HEK293 (cell line): ENCODE measurements at regions of chr1 and their contacts with region 1.

Region 1: GRCh38 chr1:40774266-40774998 is 9.2 kb upstream of the KCNQ4 start:
- H3K4me3 ChIP-seq: no peak overlapping the region
- H3K27ac ChIP-seq: no peak overlapping the region
- H3K4me1 ChIP-seq: no peaks in the 10 kb centered on the region
- CTCF ChIP-seq: peak; percentile 39; the same call in 1 of the 2 replicates

Region 2: DNA sequence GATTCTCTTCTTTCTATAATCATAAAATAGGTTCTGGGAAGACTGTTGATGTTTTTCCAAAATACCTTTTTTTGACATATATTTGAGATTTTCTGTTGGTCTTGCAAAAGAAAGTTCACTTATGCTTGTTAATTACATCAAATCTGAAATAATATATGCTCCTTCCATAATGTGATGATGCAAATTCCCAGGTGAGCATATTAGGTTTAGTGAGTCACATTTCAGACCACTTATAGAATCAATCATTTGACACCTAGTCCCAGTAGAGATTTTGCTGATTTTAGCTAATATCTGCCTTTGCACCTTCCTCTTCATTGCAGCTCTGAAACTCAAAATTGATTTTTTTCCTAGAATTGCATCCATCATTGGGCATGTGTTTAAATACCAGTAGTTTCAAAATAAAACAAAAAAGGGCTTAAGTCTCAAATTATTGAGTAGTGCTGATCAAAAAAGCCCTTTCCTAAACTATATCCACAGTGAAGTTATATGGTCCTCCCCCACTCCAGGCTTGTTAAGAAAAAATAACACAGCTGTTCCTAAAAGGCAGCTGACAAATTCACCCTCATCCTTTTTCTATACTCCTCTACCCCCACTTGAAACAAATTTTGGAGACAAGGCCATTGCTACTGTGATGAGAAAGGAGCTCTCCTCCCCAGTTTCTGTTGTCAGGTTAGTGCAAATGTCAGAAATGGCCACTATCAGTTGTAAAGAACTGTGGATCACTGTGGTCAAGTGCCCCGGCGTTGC is 27.9 kb before region 1 on chr1:
- CTCF ChIA-PET with region 1: interaction called, 12 read pairs
- POLR2A ChIA-PET with region 1: no interaction called
- H3K4me3 ChIP-seq: no peak overlapping the region
- H3K27ac ChIP-seq: no peak overlapping the region
- H3K4me1 ChIP-seq: no peaks in the 10 kb centered on the region
- CTCF ChIP-seq: no peak

Region 3: GRCh38 chr1:40755067-40755466 is 19.4 kb before region 1 on chr1:
- CTCF ChIA-PET with region 1: interaction called, 16 read pairs
- POLR2A ChIA-PET with region 1: no interaction called
- H3K4me3 ChIP-seq: no peak overlapping the region
- H3K27ac ChIP-seq: no peak overlapping the region
- H3K4me1 ChIP-seq: no peaks in the 10 kb centered on the region
- CTCF ChIP-seq: no peak

Region 4: GRCh38 chr1:40763742-40764532 is 10.5 kb before region 1 on chr1:
- CTCF ChIA-PET with region 1: interaction called, 36 read pairs
- POLR2A ChIA-PET with region 1: no interaction called
- H3K4me3 ChIP-seq: no peak overlapping the region
- H3K27ac ChIP-seq: no peak overlapping the region
- H3K4me1 ChIP-seq: no peaks in the 10 kb centered on the region
- CTCF ChIP-seq: no peak

Region 5: GRCh38 chr1:40789675-40790430 is 15.4 kb after region 1 on chr1:
- CTCF ChIA-PET with region 1: interaction called, 15 read pairs
- POLR2A ChIA-PET with region 1: no interaction called
- H3K4me3 ChIP-seq: no peak overlapping the region
- H3K27ac ChIP-seq: no peak overlapping the region
- H3K4me1 ChIP-seq: no peaks in the 10 kb centered on the region
- CTCF ChIP-seq: no peak

Region 6: GRCh38 chr1:40849801-40850592 is 75.6 kb after region 1 on chr1:
- CTCF ChIA-PET with region 1: interaction called, 32 read pairs
- POLR2A ChIA-PET with region 1: no interaction called
- H3K4me3 ChIP-seq: no peak overlapping the region
- H3K27ac ChIP-seq: no peak overlapping the region
- H3K4me1 ChIP-seq: no peaks in the 10 kb centered on the region
- CTCF ChIP-seq: peak; percentile 89

Region 7: GRCh38 chr1:40951943-40952743 is 177.7 kb after region 1 on chr1:
- CTCF ChIA-PET with region 1: interaction called, 75 read pairs
- POLR2A ChIA-PET with region 1: no interaction called
- H3K4me3 ChIP-seq: no peak overlapping the region
- H3K27ac ChIP-seq: no peak overlapping the region
- H3K4me1 ChIP-seq: no peaks in the 10 kb centered on the region
- CTCF ChIP-seq: peak; percentile 88